ENCODE measurements at regions of chr4 and their contacts with region 1.

Region 1: DNA sequence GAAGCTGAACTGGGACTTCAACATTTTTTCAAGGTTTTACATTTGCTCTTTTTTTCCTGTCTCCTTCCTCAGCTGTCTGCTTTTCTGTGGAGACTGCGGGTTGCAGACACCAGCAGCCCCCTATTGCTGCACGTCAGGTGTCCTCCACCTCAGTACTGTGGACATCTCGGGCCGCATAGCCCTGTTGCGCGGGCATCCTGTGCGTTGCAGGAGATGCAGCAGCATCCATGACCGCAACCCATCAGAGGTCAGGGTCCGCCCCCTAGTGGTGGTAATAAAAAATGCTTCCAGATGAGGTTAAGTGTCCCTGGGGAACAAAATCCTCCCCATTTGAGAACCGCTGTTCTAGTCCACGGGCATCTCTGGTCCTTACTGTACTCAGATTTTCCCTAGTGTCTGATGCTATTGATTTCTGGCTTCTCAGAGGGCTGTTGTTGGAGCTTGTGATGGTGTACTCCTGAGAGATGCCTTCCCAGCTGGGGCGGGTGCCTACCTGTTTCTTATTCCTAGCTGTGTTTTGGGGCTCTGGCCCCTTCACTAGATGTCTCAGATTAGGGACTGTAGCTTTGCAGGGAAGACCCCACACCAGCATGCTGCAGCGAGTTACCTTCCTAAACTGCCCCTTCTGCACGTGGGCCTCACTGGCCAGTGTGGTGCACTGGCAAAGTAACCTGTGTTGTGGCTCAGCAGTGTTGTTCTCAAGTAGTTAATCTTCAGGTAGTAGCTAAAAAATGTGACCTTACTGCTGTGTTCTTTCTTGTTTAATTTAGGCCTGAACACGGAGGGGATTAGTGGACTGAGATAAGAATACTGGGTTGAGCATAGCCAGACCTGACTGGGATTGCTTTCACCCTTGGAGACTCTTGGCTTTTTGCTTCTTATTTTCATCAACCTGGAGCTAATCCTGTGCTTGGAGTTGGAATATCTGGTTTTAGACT is 28.2 kb downstream of the NSD2 start:
- DNase-seq: peak; percentile 61
- H3K4me3 ChIP-seq: no peak overlapping the region
- H3K27ac ChIP-seq: no peak overlapping the region
- H3K27me3 ChIP-seq: no peaks in the 10 kb centered on the region
- CTCF ChIP-seq: peak; percentile 86

Region 2: DNA sequence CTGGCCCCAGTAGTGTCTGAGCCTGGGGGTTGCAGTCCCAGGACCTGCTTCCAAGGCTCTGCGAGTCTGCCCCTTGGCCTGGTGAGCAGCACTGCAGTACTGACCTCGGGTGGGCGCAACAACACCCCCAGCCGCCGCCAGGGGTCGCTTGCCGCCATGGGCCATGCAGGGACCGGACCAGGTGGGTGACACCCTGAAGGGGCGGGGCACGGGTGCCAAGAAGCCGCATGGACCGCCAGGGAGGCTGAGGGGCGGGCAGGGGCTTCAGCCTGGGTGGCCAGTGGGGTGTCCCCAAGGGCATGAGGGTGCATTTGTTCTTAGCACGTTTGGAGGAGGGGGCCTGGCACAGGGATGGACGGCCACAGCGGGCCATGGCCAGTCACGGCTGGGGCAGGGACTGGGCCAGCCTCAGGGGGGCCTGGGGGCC is 153.1 kb before region 1 on chr4:
- CTCF ChIA-PET with region 1: interaction called, 16 read pairs
- POLR2A ChIA-PET with region 1: no interaction called
- DNase-seq: no peak
- H3K4me3 ChIP-seq: no peak overlapping the region
- H3K27ac ChIP-seq: no peak overlapping the region
- H3K27me3 ChIP-seq: no peaks in the 10 kb centered on the region
- CTCF ChIP-seq: peak; percentile 86

Region 3: GRCh38 chr4:1856042-1856788 is 43.2 kb before region 1 on chr4 and contains the start of gene LETM1:
- CTCF ChIA-PET with region 1: interaction called, 10 read pairs
- POLR2A ChIA-PET with region 1: no interaction called
- DNase-seq: peak; percentile 84
- H3K4me3 ChIP-seq: peak within 1 kb of the TSS; percentile 86
- H3K27ac ChIP-seq: peak within 1 kb of the TSS; percentile 57
- H3K27me3 ChIP-seq: no peaks in the 10 kb centered on the region
- CTCF ChIP-seq: no peak
- polyA plus RNA-seq, gene LETM1: 11.9 and 15.2 TPM in 2 replicates

Region 4: DNA sequence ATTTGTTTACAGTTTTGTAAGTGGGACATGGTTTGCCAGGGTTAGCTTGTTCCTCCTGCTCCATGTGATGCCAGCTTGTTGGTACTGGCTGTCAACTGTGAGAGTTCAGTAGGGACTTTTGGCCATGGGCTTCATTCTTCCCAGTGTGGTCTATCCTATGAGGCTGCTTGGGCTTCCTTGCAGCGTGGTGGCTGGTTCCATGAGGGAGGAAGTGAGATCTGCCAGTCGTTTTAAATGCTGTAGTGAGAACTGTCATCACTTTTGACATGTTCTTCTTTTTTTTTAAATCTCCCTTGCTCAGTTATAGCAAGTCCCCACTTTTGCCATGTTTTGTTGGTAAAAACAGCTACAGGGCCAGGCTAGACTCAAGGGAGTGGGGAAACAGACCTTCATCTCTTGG is 12.4 kb before region 1 on chr4:
- CTCF ChIA-PET with region 1: interaction called, 23 read pairs
- POLR2A ChIA-PET with region 1: no interaction called
- DNase-seq: no peak
- H3K4me3 ChIP-seq: no peak overlapping the region
- H3K27ac ChIP-seq: peak overlapping the region; percentile 0
- H3K27me3 ChIP-seq: no peaks in the 10 kb centered on the region
- CTCF ChIP-seq: no peak

Region 5: DNA sequence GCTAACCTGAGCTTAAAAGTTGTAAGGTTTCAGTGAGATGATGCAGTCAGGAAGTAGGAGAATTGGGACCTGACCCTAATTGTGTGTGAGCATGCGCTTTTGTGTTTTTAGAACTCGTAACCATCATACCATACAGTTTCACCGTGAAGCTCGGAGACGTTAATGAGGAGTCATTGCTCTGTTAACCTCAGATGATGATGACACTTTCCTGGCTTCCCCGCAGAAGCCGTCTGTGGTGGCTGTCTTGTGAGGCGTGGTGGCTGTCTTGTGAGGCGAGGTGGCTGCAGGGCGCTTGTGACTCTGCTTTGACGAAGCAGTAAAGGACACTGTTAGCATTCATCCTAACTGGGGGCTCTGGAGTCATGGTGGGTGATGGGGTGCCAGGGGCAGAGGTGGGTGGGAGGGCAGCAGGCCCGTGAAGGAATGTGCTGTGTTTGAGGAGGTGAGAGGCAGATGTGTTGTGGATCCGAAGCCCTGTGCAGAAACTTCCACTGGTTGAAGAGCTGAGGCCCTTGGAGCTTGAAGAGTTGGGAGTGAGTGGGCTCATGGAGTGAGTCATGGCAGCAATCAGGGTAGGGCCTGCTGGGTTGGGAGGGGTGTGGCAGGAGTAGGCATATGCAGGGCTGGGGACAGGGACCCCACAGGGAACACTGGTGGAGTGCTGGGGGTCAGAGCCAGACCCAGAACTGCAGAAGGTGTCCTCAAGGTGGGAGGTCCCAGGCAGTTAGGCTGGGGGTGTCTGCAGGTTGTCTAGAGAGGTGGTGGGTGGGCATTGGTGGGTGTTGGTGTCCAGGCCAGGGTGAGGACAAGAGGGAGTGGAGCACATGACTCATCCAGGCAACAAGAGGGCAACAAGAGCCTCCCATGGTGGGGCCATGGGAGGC is 29.2 kb after region 1 on chr4:
- CTCF ChIA-PET with region 1: interaction called, 12 read pairs
- POLR2A ChIA-PET with region 1: no interaction called
- DNase-seq: no peak
- H3K4me3 ChIP-seq: no peak overlapping the region
- H3K27ac ChIP-seq: no peak overlapping the region
- H3K27me3 ChIP-seq: no peaks in the 10 kb centered on the region
- CTCF ChIP-seq: no peak

Region 6: GRCh38 chr4:1998293-1998692 is 98.9 kb after region 1 on chr4:
- CTCF ChIA-PET with region 1: no interaction called
- POLR2A ChIA-PET with region 1: no interaction called
- DNase-seq: no peak
- H3K4me3 ChIP-seq: no peak overlapping the region
- H3K27ac ChIP-seq: no peak overlapping the region
- H3K27me3 ChIP-seq: no peaks in the 10 kb centered on the region
- CTCF ChIP-seq: no peak

Region 7: DNA sequence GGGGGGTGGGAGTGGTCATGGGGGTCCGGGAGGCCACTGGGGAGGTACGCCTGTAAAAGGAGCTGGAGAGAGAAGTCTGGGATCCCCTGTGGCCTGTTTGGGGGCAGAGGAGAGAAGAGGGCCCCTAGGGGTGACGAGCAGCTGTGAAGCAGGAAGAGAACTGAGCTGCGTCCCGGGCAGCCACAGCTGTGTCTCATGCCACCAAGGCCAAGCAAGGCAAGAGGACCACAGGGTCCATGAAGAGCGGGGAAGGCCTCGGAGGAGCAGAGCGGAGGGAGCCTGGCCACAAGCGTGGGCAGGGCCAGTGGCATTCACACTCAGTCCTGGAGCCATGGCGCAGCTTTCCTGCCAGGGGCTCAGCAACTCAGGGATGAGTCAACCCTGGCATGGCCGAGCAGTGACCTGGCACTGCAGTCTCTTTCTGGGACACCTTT is 146.1 kb after region 1 on chr4:
- CTCF ChIA-PET with region 1: no interaction called
- POLR2A ChIA-PET with region 1: no interaction called
- DNase-seq: no peak
- H3K4me3 ChIP-seq: no peak overlapping the region
- H3K27ac ChIP-seq: no peak overlapping the region
- H3K27me3 ChIP-seq: peaks cover 18% of the 10 kb centered on the region
- CTCF ChIP-seq: no peak

Measured in AG04450 (cell line).